ENCODE measurements at regions of chr7 and their contacts with region 1.

Region 1: DNA sequence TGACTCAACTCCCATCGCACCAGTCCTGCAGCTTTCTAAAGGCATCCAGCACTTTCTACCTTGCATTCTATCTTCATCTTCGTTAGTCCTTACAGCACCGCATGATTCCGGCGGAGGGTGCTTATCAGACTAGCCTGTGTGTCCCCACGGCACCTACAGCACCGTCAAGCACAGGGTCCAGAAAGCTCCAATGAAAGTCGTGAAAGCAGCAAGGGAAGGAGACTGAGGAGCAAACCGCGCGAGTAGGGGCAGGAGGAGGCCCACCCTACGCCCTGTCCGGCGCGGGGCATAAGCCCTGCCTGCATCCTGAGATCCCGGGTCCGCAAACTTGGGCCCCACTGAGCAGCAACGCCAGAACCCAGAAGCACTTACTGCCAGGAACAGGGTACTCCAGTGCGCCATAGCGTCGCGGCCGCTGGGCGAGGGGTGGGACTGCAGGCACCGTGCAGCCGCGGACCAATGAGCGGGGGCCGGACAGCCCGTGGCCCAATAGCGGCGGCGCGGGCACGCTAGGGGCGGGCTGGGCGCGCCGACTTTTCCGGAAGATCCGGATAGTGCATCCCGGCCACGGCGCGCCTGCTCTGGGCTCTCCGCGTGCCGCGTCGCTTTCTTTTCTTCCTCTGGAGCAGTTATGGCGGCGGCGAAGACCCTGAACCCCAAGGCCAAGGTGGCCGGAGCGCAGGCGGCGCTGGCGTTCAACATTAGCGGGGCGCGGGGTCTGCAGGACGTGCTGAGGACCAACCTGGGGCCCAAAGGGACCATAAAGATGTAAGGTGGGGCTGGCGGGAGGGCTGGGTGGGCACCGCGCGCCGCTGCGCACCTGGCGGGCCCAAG is 122.1 kb upstream of the VKORC1L1 start:
- DNase-seq: peak; percentile 98
- H3K4me3 Mint-ChIP-seq: peak overlapping the region; percentile 87
- H3K27ac Mint-ChIP-seq: peak overlapping the region; percentile 87
- H3K4me1 Mint-ChIP-seq: peaks cover 6% of the 10 kb centered on the region
- H3K27me3 Mint-ChIP-seq: no peaks in the 10 kb centered on the region

Region 2: GRCh38 chr7:65722345-65722792 is 28.4 kb before region 1 on chr7:
- intact Hi-C with region 1: loop called (anchors 2 kb)
- DNase-seq: peak; percentile 91
- H3K4me3 Mint-ChIP-seq: no peak overlapping the region
- H3K27ac Mint-ChIP-seq: no peak overlapping the region
- H3K4me1 Mint-ChIP-seq: peaks cover 4% of the 10 kb centered on the region
- H3K27me3 Mint-ChIP-seq: no peaks in the 10 kb centered on the region

Region 3: GRCh38 chr7:65832281-65832680 is 81.6 kb after region 1 on chr7:
- intact Hi-C with region 1: no loop called
- DNase-seq: peak; percentile 60
- H3K4me3 Mint-ChIP-seq: no peak overlapping the region
- H3K27ac Mint-ChIP-seq: no peak overlapping the region
- H3K4me1 Mint-ChIP-seq: peaks cover 5% of the 10 kb centered on the region
- H3K27me3 Mint-ChIP-seq: no peaks in the 10 kb centered on the region

Region 4: GRCh38 chr7:65872776-65873581 is 122.3 kb after region 1 on chr7 and contains the start of gene VKORC1L1:
- intact Hi-C with region 1: loop called (anchors 1 kb)
- DNase-seq: peak; percentile 98
- H3K4me3 Mint-ChIP-seq: peak within 1 kb of the TSS; percentile 87
- H3K27ac Mint-ChIP-seq: peak within 1 kb of the TSS; percentile 88
- H3K4me1 Mint-ChIP-seq: peaks cover 8% of the 10 kb centered on the region
- H3K27me3 Mint-ChIP-seq: peaks cover 1% of the 10 kb centered on the region
- total RNA-seq, gene VKORC1L1: 27.9 and 31.0 TPM in 2 replicates

Region 5: GRCh38 chr7:66114793-66115649 is 364.3 kb after region 1 on chr7 and contains the start of gene CRCP:
- intact Hi-C with region 1: loop called (anchors 10 kb)
- DNase-seq: peak; percentile 95
- H3K4me3 Mint-ChIP-seq: peak within 1 kb of the TSS; percentile 100
- H3K27ac Mint-ChIP-seq: peak within 1 kb of the TSS; percentile 98
- H3K4me1 Mint-ChIP-seq: peaks cover 37% of the 10 kb centered on the region
- H3K27me3 Mint-ChIP-seq: no peaks in the 10 kb centered on the region
- total RNA-seq, gene CRCP: 37.2 and 41.9 TPM in 2 replicates